GM12878 (cell line): ENCODE measurements at regions of chr18 and their contacts with region 1.

Region 1: GRCh38 chr18:6414118-6414722 is 491 bp downstream of the L3MBTL4 start:
- DNase-seq: no peak
- ATAC-seq: peak; percentile 94
- H3K4me3 ChIP-seq: peak overlapping the region; percentile 82
- H3K27ac ChIP-seq: peak overlapping the region; percentile 45
- H3K4me1 ChIP-seq: peaks cover 5% of the 10 kb centered on the region; the same call in 1 of the 2 replicates
- H3K27me3 ChIP-seq: no peaks in the 10 kb centered on the region
- CTCF ChIP-seq: peak in 2 of 3 experiments; percentile 21; a peak in 2 of 6 replicates
- EP300 ChIP-seq: no peak
- POLR2A ChIP-seq: peak; percentile 75
- RAD21 ChIP-seq: 0 out of 2 replicates have a peak, but pooled peaks have one; percentile 2

Region 2: GRCh38 chr18:5975111-5976002 is 438.9 kb before region 1 on chr18:
- CTCF ChIA-PET with region 1: no interaction called
- POLR2A ChIA-PET with region 1: no interaction called
- RAD21 ChIA-PET with region 1: no interaction called
- SMC1A ChIA-PET with region 1: no interaction called
- in situ Hi-C with region 1: no loop called
- intact Hi-C with region 1: loop called (anchors 10 kb)
- DNase-seq: peak; percentile 87
- ATAC-seq: peak; percentile 89
- H3K4me3 ChIP-seq: peak overlapping the region; percentile 24; the same call in 1 of the 2 replicates
- H3K27ac ChIP-seq: peak overlapping the region; percentile 82
- H3K4me1 ChIP-seq: peaks cover 64% of the 10 kb centered on the region
- H3K27me3 ChIP-seq: no peaks in the 10 kb centered on the region; a peak in 1 of 4 replicates
- CTCF ChIP-seq: peak in 1 of 3 experiments; percentile 11; a peak in 2 of 6 replicates
- EP300 ChIP-seq: peak; percentile 64 to 78; a peak in 3 of 4 replicates
- POLR2A ChIP-seq: no peak
- RAD21 ChIP-seq: peak; percentile 3; the same call in 1 of the 2 replicates

Region 3: DNA sequence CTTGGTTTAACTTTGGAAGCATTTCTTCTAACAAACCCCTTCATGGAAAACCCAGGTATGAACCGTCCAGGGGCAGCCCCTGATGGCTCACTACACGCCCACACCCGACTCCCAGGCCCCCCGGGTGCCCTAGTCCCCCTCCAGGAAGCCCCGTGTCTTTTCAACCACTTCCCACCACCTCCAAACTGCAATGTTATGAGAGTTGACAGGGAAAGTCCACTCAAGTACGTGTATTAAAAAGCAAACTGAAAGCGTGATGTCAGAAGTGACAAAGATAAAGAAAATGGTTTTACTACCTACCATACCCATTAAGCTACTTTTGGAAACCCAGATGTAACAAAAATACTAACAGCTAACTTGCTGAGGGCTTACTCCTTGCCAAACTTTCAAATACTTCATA is 51.0 kb before region 1 on chr18:
- CTCF ChIA-PET with region 1: interaction called, 4 read pairs
- POLR2A ChIA-PET with region 1: no interaction called
- RAD21 ChIA-PET with region 1: interaction called, 4 read pairs
- SMC1A ChIA-PET with region 1: interaction called, 4 read pairs
- in situ Hi-C with region 1: no loop called
- intact Hi-C with region 1: loop called (anchors 5 kb)
- DNase-seq: peak; percentile 66
- ATAC-seq: peak; percentile 87
- H3K4me3 ChIP-seq: peak overlapping the region; percentile 35; the same call in 1 of the 2 replicates
- H3K27ac ChIP-seq: peak overlapping the region; percentile 4
- H3K4me1 ChIP-seq: peaks cover 11% of the 10 kb centered on the region
- H3K27me3 ChIP-seq: no peaks in the 10 kb centered on the region
- CTCF ChIP-seq: no peak
- EP300 ChIP-seq: peak; percentile 59 to 70; a peak in 2 of 4 replicates
- POLR2A ChIP-seq: no peak; the same call in 1 of the 2 replicates
- RAD21 ChIP-seq: no peak

Region 4: DNA sequence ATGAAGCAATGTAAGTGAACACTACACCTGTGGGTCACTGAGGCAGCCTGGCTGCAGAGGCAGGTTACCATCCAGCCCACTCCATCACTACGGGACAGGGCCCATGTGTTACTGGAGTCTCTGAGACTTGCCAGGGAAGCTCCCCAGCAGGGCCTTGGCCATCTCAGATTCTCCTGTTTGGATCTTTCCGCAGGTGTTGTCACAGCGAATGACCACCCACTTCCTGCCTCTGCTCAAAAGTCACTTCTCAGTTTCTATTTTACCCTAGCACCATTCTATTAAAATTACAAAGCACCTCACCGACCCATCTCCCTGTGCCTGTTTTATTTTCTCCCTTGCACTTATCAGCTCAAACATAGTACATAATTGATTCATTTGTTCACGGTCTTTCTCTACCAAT is 35.0 kb after region 1 on chr18:
- CTCF ChIA-PET with region 1: no interaction called
- POLR2A ChIA-PET with region 1: no interaction called
- RAD21 ChIA-PET with region 1: no interaction called
- SMC1A ChIA-PET with region 1: no interaction called
- in situ Hi-C with region 1: no loop called
- intact Hi-C with region 1: no loop called
- DNase-seq: peak; percentile 40
- ATAC-seq: peak; percentile 85
- H3K4me3 ChIP-seq: no peak overlapping the region
- H3K27ac ChIP-seq: no peak overlapping the region
- H3K4me1 ChIP-seq: peaks cover 2% of the 10 kb centered on the region; the same call in 1 of the 2 replicates
- H3K27me3 ChIP-seq: no peaks in the 10 kb centered on the region
- CTCF ChIP-seq: no peak
- EP300 ChIP-seq: no peak
- POLR2A ChIP-seq: no peak
- RAD21 ChIP-seq: no peak